ENCODE measurements at regions of chr11 and their contacts with region 1.

Region 1: GRCh38 chr11:102614485-102614884 is 10.6 kb downstream of the MMP20 start:
- DNase-seq: no peak
- H3K4me3 Mint-ChIP-seq: no peak overlapping the region
- H3K27ac Mint-ChIP-seq: no peak overlapping the region
- H3K4me1 Mint-ChIP-seq: peaks cover 26% of the 10 kb centered on the region
- H3K27me3 Mint-ChIP-seq: peaks cover 4% of the 10 kb centered on the region

Region 2: GRCh38 chr11:102268329-102269193 is 345.9 kb before region 1 on chr11:
- intact Hi-C with region 1: loop called (anchors 5 kb)
- DNase-seq: peak; percentile 53
- H3K4me3 Mint-ChIP-seq: peak overlapping the region; percentile 67
- H3K27ac Mint-ChIP-seq: no peak overlapping the region
- H3K4me1 Mint-ChIP-seq: peaks cover 28% of the 10 kb centered on the region
- H3K27me3 Mint-ChIP-seq: peaks cover 41% of the 10 kb centered on the region

Region 3: GRCh38 chr11:102341844-102342318 is 272.6 kb before region 1 on chr11:
- intact Hi-C with region 1: loop called (anchors 1 kb)
- DNase-seq: peak; percentile 55
- H3K4me3 Mint-ChIP-seq: no peak overlapping the region
- H3K27ac Mint-ChIP-seq: no peak overlapping the region
- H3K4me1 Mint-ChIP-seq: peaks cover 35% of the 10 kb centered on the region
- H3K27me3 Mint-ChIP-seq: no peaks in the 10 kb centered on the region

Region 4: DNA sequence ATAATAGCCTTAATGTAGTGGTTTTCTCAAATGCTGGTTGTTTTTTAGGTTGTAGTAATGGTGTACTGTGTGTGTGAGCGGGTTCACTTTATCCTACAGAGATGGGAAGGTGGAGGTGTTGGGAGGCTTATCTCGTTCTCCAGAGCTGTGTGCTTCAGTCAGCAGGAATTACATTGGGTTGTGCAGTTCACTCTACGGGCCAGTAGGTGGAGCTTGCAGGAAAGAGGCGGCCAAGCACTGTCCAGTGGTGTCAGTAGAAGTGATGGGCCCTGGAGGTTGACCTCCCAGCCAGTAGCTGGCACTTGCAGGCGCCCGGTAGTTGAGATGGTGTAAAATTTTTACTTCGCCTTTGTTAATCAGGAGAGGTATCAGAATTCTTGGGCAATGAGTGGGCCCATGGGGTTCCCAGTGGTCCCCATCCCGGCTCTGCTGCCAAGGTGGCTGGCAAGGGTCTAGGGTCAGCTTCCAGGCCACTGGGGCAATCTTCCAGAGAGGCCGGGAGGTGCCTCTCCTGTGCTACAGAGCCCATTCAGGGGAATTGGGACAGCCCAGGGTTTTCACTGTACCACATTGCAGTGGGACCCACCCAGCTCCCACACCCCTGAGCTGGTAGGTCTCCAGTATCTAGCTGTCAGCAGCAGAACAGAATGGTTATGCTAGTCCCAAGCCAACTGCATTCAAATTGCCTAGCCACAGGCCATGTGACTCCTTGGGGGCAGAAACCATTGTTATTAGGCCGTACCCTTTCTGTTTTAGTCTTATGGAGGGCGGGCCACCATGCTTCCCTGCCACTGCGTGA is 223.6 kb before region 1 on chr11:
- intact Hi-C with region 1: loop called (anchors 1 kb)
- DNase-seq: peak; percentile 36
- H3K4me3 Mint-ChIP-seq: no peak overlapping the region
- H3K27ac Mint-ChIP-seq: no peak overlapping the region
- H3K4me1 Mint-ChIP-seq: peaks cover 52% of the 10 kb centered on the region
- H3K27me3 Mint-ChIP-seq: no peaks in the 10 kb centered on the region

Region 5: GRCh38 chr11:102518296-102519094 is 96.0 kb before region 1 on chr11:
- intact Hi-C with region 1: loop called (anchors 2 kb)
- DNase-seq: no peak
- H3K4me3 Mint-ChIP-seq: no peak overlapping the region
- H3K27ac Mint-ChIP-seq: no peak overlapping the region
- H3K4me1 Mint-ChIP-seq: peaks cover 9% of the 10 kb centered on the region
- H3K27me3 Mint-ChIP-seq: peaks cover 3% of the 10 kb centered on the region

Region 6: GRCh38 chr11:102572554-102573220 is 41.8 kb before region 1 on chr11:
- intact Hi-C with region 1: no loop called
- DNase-seq: no peak
- H3K4me3 Mint-ChIP-seq: no peak overlapping the region
- H3K27ac Mint-ChIP-seq: no peak overlapping the region
- H3K4me1 Mint-ChIP-seq: peaks cover 23% of the 10 kb centered on the region
- H3K27me3 Mint-ChIP-seq: peaks cover 2% of the 10 kb centered on the region

Region 7: GRCh38 chr11:102589047-102589459 is 25.4 kb before region 1 on chr11:
- intact Hi-C with region 1: loop called (anchors 1 kb)
- DNase-seq: no peak
- H3K4me3 Mint-ChIP-seq: no peak overlapping the region
- H3K27ac Mint-ChIP-seq: peak overlapping the region; percentile 74
- H3K4me1 Mint-ChIP-seq: peaks cover 49% of the 10 kb centered on the region
- H3K27me3 Mint-ChIP-seq: no peaks in the 10 kb centered on the region

Region 8: GRCh38 chr11:102666331-102666957 is 52.0 kb after region 1 on chr11:
- intact Hi-C with region 1: loop called (anchors 1 kb)
- DNase-seq: no peak
- H3K4me3 Mint-ChIP-seq: no peak overlapping the region
- H3K27ac Mint-ChIP-seq: no peak overlapping the region
- H3K4me1 Mint-ChIP-seq: no peaks in the 10 kb centered on the region
- H3K27me3 Mint-ChIP-seq: peaks cover 7% of the 10 kb centered on the region

Measured in activated T-helper 1 cell treated with anti-CD3 and anti-CD28 coated beads, Interleukin-12 subunit alpha, Interleukin-12 subunit beta, Interleukin-2, Interleukin-4 antibody, amounts not matched to agents 30 ng/mL and 10 ng/mL and 1 ng/mL, durations not matched to agents 14 hours and 24 hours and 36 hours (primary cell).